A549 (cell line): ENCODE measurements at regions of chr14 and their contacts with region 1.

Region 1: GRCh38 chr14:60184146-60184904 is 19.1 kb upstream of the DHRS7 start:
- DNase-seq: peak; percentile 12 to 61
- ATAC-seq: peak in 1 of 2 experiments; percentile 57; a peak in 2 of 6 replicates
- H3K4me3 ChIP-seq: peak overlapping the region; percentile 42
- H3K27ac ChIP-seq: peak overlapping the region; percentile 2 to 35; a peak in 3 of 6 replicates
- H3K4me1 ChIP-seq: peaks cover 7% of the 10 kb centered on the region; the same call in 2 of the 3 replicates
- CTCF ChIP-seq: peak; percentile 96
- EP300 ChIP-seq: no peak
- POLR2A ChIP-seq: no peak
- RAD21 ChIP-seq: peak; percentile 94 to 95

Region 2: DNA sequence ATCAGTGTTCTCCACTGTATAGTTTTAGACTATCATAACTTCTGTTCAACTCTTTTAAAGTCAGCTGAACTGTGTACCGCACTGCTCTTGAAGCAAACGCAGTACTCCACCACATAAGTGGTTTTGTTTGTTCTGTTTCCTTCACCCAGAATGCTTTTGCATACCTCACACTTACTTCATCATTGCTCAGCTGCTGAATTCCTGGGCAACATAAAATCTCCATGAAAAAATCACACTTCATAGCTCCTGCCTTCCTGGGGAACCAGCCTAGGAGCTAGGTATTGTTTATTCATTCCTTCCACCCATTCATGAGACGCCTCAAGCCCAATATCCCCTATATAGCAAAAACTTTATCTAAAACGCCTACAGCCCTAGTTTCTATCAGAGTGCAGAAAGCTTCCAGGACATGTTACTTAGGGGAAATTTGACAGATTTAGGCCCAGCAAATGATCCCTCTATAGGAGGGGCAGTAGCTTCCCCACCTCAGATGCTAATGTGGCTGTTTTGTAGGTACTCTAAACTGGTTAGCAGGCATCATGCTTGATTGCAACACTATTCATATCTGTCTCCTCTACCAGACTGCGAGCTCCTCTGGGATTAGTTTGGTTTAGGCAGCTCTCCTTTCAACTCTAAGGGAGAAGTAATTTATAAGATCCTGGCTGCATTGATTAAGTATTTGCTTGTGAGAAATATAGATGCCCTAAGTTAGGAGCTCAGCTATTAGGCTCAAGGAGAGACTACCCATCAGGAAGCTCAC is 219.9 kb before region 1 on chr14:
- CTCF ChIA-PET with region 1: interaction called, 106 read pairs
- POLR2A ChIA-PET with region 1: no interaction called
- DNase-seq: no peak
- ATAC-seq: peak; percentile 17 to 40; a peak in 3 of 6 replicates
- H3K4me3 ChIP-seq: no peak overlapping the region
- H3K27ac ChIP-seq: no peak overlapping the region
- H3K4me1 ChIP-seq: peaks cover 5% of the 10 kb centered on the region; the same call in 1 of the 3 replicates
- CTCF ChIP-seq: no peak
- EP300 ChIP-seq: no peak
- POLR2A ChIP-seq: no peak
- RAD21 ChIP-seq: no peak

Region 3: GRCh38 chr14:60064491-60065072 is 119.7 kb before region 1 on chr14:
- CTCF ChIA-PET with region 1: interaction called, 46 read pairs
- POLR2A ChIA-PET with region 1: no interaction called
- DNase-seq: peak; percentile 3 to 51
- ATAC-seq: peak; percentile 54 to 67; a peak in 4 of 6 replicates
- H3K4me3 ChIP-seq: no peak overlapping the region
- H3K27ac ChIP-seq: no peak overlapping the region
- H3K4me1 ChIP-seq: no peaks in the 10 kb centered on the region
- CTCF ChIP-seq: peak; percentile 68
- EP300 ChIP-seq: no peak
- POLR2A ChIP-seq: no peak
- RAD21 ChIP-seq: peak; percentile 79 to 83

Region 4: DNA sequence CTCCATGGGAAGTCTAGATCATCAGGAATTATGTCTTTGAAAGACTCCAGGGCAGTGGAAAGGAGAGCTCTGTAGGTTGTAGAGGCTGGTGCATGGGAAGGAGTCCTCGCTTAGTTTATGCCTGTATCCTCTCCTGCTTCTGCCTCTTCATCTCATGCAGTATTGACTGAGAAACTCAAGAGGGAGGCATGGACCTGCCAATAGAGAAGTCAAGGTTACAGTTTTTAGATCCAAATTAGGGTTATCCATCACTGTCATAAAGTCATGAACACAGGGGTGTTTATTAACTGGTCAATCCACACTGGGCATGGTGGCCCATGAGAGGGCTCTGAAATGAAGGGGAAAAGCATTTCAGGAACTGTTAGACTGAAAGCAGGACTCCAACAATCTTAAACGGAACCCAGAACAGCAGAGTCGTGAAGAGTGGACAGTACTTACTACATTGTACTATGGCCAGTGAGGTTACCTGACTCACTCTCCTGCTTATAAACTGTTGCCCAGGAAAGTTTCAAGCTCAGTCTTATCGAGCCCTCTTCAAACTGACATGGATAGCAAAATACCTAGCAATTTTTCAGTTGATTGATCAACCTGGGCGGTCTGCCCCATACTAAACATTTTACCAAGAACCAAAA is 11.0 kb after region 1 on chr14:
- CTCF ChIA-PET with region 1: interaction called, 18 read pairs
- POLR2A ChIA-PET with region 1: no interaction called
- DNase-seq: peak in 1 of 2 experiments; percentile 7
- ATAC-seq: peak; percentile 34 to 59; a peak in 3 of 6 replicates
- H3K4me3 ChIP-seq: no peak overlapping the region
- H3K27ac ChIP-seq: no peak overlapping the region
- H3K4me1 ChIP-seq: no peaks in the 10 kb centered on the region
- CTCF ChIP-seq: no peak
- EP300 ChIP-seq: no peak
- POLR2A ChIP-seq: no peak
- RAD21 ChIP-seq: peak in 1 of 2 experiments; percentile 25; a peak in 2 of 5 replicates

Region 5: DNA sequence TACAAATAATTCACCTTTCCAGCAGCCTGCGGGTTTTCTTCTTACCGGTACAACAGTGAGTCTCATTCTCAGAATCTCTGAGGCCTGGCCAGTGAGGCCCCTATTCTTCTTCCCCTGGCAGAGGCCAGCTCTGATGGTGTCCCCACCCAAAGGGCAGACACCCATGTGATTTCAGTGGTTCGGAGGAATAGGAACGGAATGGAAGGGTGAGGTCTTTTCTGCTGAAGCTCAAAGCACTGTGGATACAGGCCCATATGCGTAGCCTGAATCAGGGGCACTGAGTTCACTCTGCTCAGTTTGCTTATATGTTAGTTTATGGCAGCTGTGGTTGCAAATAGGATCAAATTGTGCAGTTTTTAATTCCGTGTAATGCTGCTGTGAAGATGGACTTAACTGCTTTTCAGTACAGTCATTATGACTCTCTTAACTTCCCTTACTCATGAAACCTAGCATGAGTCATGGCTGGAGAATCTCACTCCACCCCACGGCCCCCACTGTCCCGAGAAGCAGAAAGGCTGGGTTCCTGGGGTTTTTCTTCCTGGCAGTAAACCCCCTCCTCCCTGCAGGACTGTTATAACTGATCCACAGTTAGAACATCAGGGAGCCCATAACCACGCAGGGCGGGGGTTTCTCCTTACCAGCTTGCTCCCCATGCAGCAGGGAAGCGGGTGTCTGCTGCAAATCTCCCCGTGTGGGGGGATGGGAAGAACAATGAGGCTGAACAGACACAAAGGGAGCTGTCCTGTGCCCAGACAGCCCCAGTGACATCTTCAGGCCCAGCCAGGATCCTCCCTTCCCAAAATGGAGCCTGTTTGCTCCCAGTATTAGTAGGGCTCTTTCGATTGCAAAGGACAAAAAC is 919.4 kb after region 1 on chr14:
- CTCF ChIA-PET with region 1: no interaction called
- POLR2A ChIA-PET with region 1: no interaction called
- DNase-seq: peak; percentile 92 to 96
- ATAC-seq: peak; percentile 91 to 92
- H3K4me3 ChIP-seq: no peak overlapping the region
- H3K27ac ChIP-seq: peak overlapping the region; percentile 89 to 97
- H3K4me1 ChIP-seq: peaks cover 43% of the 10 kb centered on the region
- CTCF ChIP-seq: no peak
- EP300 ChIP-seq: peak; percentile 51 to 66; a peak in 2 of 5 replicates
- POLR2A ChIP-seq: no peak
- RAD21 ChIP-seq: peak; percentile 35; a peak in 4 of 5 replicates